ENCODE measurements at regions of chr12 and their contacts with region 1.

Region 1: DNA sequence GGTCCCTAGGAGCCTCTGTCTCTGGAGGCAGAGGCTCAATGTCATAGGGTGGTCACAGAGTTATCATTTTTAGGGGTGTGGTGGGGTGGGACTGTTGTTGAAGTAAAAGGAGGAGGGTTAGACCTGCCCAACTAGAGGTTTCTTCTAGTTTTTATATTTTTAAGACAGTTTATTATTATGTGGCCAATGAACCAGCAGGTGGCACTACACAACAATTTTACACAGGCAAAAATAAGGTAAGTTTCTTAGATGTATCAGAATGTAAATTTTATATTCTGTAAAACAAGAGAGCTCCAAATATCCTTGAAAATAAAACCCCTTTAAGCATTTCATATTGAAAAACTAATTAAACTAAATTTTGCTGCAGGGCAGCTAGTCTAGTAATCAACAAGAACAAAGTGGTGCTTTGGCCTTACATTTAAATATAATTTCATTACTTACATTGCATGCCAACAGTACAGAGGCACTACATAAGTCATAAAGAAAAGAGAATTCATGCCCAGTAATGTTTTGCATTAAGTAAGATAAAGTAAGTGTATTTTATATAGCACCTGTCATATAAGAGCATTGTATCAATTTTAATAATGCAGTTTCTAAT is 22.2 kb upstream of the OVCH1 start:
- DNase-seq: peak in 5 of 9 experiments; percentile 1 to 54 (median 16)
- ATAC-seq: no peak
- H3K4me3 ChIP-seq: no peak overlapping the region
- H3K4me3 Mint-ChIP-seq: no peak overlapping the region
- H3K27ac ChIP-seq: no peak overlapping the region
- H3K27ac Mint-ChIP-seq: no peak overlapping the region
- H3K4me1 ChIP-seq: no peaks in the 10 kb centered on the region
- H3K4me1 Mint-ChIP-seq: no peaks in the 10 kb centered on the region
- H3K27me3 ChIP-seq: no peaks in the 10 kb centered on the region
- H3K27me3 Mint-ChIP-seq: peaks cover 7% of the 10 kb centered on the region
- CTCF ChIP-seq: peak; percentile 61

Region 2: GRCh38 chr12:29309320-29309902 is 210.3 kb before region 1 on chr12:
- CTCF ChIA-PET with region 1: no interaction called
- POLR2A ChIA-PET with region 1: no interaction called
- intact Hi-C with region 1: loop called in 1 of 2 experiments (anchors 2 kb)
- DNase-seq: peak in 2 of 9 experiments; percentile 7 to 25
- ATAC-seq: no peak
- H3K4me3 ChIP-seq: no peak overlapping the region
- H3K4me3 Mint-ChIP-seq: no peak overlapping the region
- H3K27ac ChIP-seq: no peak overlapping the region
- H3K27ac Mint-ChIP-seq: no peak overlapping the region
- H3K4me1 ChIP-seq: no peaks in the 10 kb centered on the region
- H3K4me1 Mint-ChIP-seq: no peaks in the 10 kb centered on the region
- H3K27me3 ChIP-seq: no peaks in the 10 kb centered on the region
- H3K27me3 Mint-ChIP-seq: no peaks in the 10 kb centered on the region
- CTCF ChIP-seq: peak; percentile 31

Region 3: GRCh38 chr12:29499235-29499634 is 20.4 kb before region 1 on chr12:
- CTCF ChIA-PET with region 1: no interaction called
- POLR2A ChIA-PET with region 1: no interaction called
- intact Hi-C with region 1: no loop called
- DNase-seq: no peak
- ATAC-seq: no peak
- H3K4me3 ChIP-seq: no peak overlapping the region
- H3K4me3 Mint-ChIP-seq: no peak overlapping the region
- H3K27ac ChIP-seq: no peak overlapping the region
- H3K27ac Mint-ChIP-seq: no peak overlapping the region
- H3K4me1 ChIP-seq: no peaks in the 10 kb centered on the region
- H3K4me1 Mint-ChIP-seq: no peaks in the 10 kb centered on the region
- H3K27me3 ChIP-seq: no peaks in the 10 kb centered on the region
- H3K27me3 Mint-ChIP-seq: peaks cover 6% of the 10 kb centered on the region
- CTCF ChIP-seq: no peak